Adrenal gland (tissue), 19 donors: ENCODE measurements at regions of chr17 and their contacts with region 1.

Region 1: DNA sequence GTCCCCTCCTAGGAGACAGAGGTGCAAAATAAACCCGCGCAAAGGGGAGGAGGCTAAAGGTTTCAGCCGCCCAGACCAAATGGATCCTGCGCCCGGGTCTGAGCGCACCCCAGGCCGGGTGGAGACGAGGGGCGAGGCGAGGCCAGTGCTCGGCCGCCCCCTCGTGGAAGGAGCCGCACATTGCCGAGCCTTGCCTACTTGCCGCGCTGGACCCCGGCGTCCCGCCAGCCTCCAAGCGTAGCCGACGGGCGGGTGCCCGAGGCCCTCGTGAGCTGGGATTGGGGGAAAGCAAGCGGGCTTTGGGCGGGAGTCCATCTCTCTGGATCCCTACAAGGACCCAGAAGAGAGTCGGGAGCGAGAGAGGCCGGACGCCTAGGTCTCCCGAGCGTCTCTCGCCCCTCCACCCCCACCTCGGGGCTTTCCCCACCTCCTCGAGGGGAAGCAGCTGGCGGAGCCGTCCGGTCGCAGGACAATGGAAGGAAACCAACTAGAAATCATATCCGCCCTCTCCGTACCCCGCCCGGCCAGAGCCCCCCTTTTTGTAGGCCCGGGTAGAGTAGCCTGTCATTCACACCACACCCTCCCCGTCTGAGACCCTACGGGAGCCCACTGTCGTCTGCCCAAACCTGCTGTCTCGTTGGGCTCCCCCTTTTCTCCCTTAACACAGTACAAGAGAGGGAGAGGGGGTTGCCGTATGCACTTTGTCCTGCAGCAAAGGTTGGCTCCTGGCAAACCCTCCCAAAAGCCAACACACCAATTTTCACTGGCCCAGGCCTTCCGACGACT is 664 bp upstream of the BCL6B start:
- DNase-seq: peak; percentile 69 to 89 (median 81)
- H3K4me3 ChIP-seq: peak overlapping the region in 1 of 4 donors; percentile 6
- H3K27ac ChIP-seq: peak overlapping the region; percentile 27 to 71 (median 52)
- H3K4me1 ChIP-seq: peaks cover 19 to 23% of the 10 kb centered on the region in 2 donors
- H3K27me3 ChIP-seq: no peaks in the 10 kb centered on the region
- CTCF ChIP-seq: peak; percentile 74 to 93 (median 91)
- POLR2A ChIP-seq: peak in 1 of 2 donors; percentile 16

Region 2: GRCh38 chr17:6713130-6713917 is 308.9 kb before region 1 on chr17 and contains the start of gene SLC13A5:
- intact Hi-C with region 1: no loop called
- DNase-seq: peak in 5 of 7 donors; percentile 27 to 62 (median 34)
- H3K4me3 ChIP-seq: peak within 1 kb of the TSS in 1 of 4 donors; percentile 33
- H3K27ac ChIP-seq: no peak within 1 kb of the TSS
- H3K4me1 ChIP-seq: peaks cover 0 to 9% of the 10 kb centered on the region in 2 donors
- H3K27me3 ChIP-seq: peaks cover 29% of the 10 kb centered on the region
- CTCF ChIP-seq: peak in 4 of 6 experiments; percentile 20 to 39 (median 33)
- POLR2A ChIP-seq: no peak
- total RNA-seq, gene SLC13A5: 1.6 to 7.2 (median 5.3) TPM in 7 of 9 donors, not detected in the others

Region 3: DNA sequence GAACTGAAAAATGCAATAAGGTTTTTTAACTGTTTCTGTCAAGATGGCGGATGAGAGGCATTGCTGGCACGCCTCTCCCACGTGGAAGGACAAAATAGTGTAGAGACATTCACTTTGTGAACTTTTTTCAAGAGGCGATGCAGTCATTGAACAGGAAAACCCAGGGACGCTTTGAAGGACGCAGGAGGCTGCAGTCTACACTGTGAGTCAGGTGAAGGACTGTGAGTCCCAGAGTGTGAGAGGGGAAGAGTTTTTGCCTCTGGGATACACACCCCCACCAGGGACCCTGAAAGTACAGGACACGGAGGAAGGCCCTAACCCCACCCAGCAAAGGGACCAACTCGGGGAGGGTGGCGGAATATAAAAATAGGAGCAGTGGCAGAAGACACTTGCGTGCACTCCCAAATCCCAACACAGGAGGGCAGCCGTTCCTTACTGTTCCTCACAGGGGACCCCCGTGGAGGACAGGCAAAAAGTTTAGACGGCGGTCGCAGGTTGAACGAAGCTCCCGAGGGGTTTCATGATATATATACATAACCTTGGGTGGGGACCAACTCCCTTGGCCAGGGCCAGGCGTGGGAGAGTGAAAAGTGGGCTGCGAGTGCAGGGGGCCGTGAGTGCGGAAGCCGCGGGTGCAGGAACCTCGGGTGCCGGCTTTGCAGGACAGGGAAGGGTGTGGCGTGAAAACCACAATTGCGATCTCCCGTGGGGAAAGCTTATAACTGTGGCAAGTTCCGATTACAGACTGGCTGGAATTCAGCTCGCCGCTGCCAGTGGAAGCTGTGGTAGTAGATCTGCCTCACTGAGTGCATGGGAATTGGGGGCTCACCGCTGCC is 108.4 kb before region 1 on chr17:
- intact Hi-C with region 1: loop called in 1 of 2 experiments (anchors 5 kb)
- DNase-seq: peak; percentile 49 to 85 (median 74)
- H3K4me3 ChIP-seq: no peak overlapping the region
- H3K27ac ChIP-seq: no peak overlapping the region
- H3K4me1 ChIP-seq: peaks cover 0 to 5% of the 10 kb centered on the region in 2 donors
- H3K27me3 ChIP-seq: no peaks in the 10 kb centered on the region
- CTCF ChIP-seq: peak; percentile 68 to 93 (median 81)
- POLR2A ChIP-seq: no peak